H1 (cell line): ENCODE measurements at regions of chr2 and their contacts with region 1.

Region 1: DNA sequence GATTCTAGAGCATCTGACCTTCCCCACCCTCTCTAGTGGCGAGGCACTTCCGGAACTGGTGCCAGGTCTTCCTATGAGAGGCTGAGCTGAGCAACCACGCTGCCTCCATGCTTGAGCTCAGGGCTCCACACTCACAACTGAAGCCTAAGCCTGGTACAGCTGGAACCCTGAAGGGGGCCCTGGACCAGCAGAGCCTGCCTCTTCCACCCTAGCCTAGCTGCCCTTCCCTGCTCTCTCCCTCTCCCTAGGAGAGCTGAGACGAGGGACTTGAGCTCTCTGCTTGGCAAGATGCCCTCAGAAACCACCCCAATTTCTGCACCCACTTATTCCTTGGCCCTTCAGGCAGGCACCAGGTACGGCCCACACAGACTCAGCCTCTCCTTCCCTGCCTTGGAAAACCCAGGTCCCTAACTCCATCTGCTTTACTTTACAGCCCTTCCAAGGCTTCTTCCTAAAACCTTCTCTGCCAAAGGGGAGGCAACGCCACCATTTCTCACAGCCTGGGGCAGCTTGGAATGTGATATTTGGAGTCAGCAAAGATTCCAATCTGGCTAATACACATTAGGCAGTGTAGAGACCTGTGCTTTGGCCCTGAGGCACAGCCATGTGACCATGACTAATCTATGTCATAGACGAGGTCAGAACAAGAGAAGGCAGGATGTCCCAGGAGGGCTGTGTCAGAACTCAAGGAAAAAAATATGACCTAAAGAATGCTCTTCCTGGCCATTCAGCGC is 18.8 kb downstream of the COX7A2L start:
- DNase-seq: peak in 1 of 2 experiments; percentile 19
- H3K4me3 ChIP-seq: no peak overlapping the region
- H3K27ac ChIP-seq: no peak overlapping the region
- H3K4me1 ChIP-seq: peaks cover 0 to 6% (median 0%) of the 10 kb centered on the region in 4 experiments; a peak in 1 of 7 replicates
- H3K27me3 ChIP-seq: no peaks in the 10 kb centered on the region
- CTCF ChIP-seq: no peak
- EP300 ChIP-seq: no peak
- POLR2A ChIP-seq: no peak
- RAD21 ChIP-seq: no peak

Region 2: DNA sequence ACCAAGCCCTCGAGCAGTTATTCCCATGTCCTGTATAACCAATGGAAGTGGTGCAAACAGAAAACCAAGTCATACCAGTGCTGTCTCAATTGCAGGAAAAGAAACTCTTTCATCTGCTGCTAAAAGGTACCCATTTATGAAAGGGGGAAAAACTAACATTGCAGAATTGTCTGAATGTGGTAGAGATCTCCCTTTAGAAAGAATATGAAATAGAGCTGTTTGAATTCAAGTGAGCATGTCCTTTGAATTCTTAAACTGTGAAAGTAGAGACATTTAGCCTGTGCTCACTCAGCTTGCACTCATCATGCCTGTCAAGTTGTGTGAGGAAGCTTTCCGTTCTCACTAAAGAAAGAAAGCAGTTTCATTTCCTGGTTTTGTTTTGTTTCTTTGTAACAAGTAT is 85.7 kb before region 1 on chr2:
- CTCF ChIA-PET with region 1: no interaction called
- POLR2A ChIA-PET with region 1: no interaction called
- DNase-seq: no peak
- H3K4me3 ChIP-seq: no peak overlapping the region
- H3K27ac ChIP-seq: no peak overlapping the region; the same call in 1 of the 2 replicates
- H3K4me1 ChIP-seq: peaks cover 0 to 4% (median 0%) of the 10 kb centered on the region in 4 experiments; a peak in 1 of 7 replicates
- H3K27me3 ChIP-seq: no peaks in the 10 kb centered on the region
- CTCF ChIP-seq: no peak
- EP300 ChIP-seq: no peak
- POLR2A ChIP-seq: no peak
- RAD21 ChIP-seq: no peak

Region 3: DNA sequence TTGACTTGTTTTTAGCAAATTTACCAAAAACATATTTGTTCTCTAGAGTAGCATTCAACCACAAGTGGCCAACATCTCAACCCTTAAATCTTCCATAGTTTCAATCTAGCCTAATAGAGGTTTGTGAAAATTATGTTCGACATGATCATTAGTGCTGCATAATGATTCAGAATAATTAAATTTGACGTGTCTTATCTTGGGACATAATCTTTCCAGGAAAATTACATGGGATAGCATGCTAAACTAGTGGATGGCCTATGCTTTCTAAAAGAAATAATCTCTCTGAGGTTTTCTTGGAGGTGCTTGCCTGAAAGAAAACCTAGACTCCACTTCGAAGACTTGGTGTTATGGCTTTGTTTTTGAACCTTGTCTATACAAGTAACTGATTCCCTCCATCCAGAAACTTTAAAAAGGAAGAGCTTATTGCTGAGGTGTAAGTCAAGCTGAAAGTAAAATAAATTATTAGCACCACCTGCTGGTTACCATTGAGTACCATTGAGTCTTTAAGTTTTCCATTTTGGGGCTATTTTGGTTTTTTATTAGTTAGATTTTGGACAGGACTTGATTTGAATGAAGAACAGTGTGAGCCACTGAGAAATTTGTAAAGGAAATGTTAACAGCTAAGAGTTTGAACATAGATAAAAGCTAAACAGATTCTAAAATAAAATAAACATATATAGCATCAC is 13.9 kb before region 1 on chr2:
- CTCF ChIA-PET with region 1: interaction called, 19 read pairs
- POLR2A ChIA-PET with region 1: no interaction called
- DNase-seq: no peak
- H3K4me3 ChIP-seq: no peak overlapping the region
- H3K27ac ChIP-seq: no peak overlapping the region
- H3K4me1 ChIP-seq: no peaks in the 10 kb centered on the region
- H3K27me3 ChIP-seq: no peaks in the 10 kb centered on the region
- CTCF ChIP-seq: no peak; a peak in 1 of 4 replicates
- EP300 ChIP-seq: no peak
- POLR2A ChIP-seq: no peak
- RAD21 ChIP-seq: peak in 1 of 2 experiments; percentile 9; a peak in 1 of 4 replicates

Region 4: GRCh38 chr2:42360890-42361727 is 18.9 kb after region 1 on chr2 and contains the start of gene COX7A2L:
- CTCF ChIA-PET with region 1: interaction called, 7 read pairs
- POLR2A ChIA-PET with region 1: interaction called, 16 read pairs
- DNase-seq: peak; percentile 94 to 99
- H3K4me3 ChIP-seq: peak within 1 kb of the TSS; percentile 68 to 100 (median 94)
- H3K27ac ChIP-seq: peak within 1 kb of the TSS; percentile 98
- H3K4me1 ChIP-seq: peaks cover 0 to 6% (median 2%) of the 10 kb centered on the region in 4 experiments; a peak in 3 of 7 replicates
- H3K27me3 ChIP-seq: no peaks in the 10 kb centered on the region
- CTCF ChIP-seq: peak; percentile 12 to 32 (median 25)
- EP300 ChIP-seq: peak in 1 of 2 experiments; percentile 19; a peak in 1 of 3 replicates
- POLR2A ChIP-seq: peak; percentile 81 to 82
- RAD21 ChIP-seq: peak; percentile 32 to 42; a peak in 3 of 4 replicates
- total RNA-seq, gene COX7A2L: 85.6 and 91.7 TPM in 2 replicates